Naive thymus-derived CD8-positive, alpha-beta T cell (primary cell): ENCODE measurements at regions of chr1 and their contacts with region 1.

Region 1: GRCh38 chr1:37479255-37480124 is 5.1 kb downstream of the ZC3H12A start:
- DNase-seq: peak; percentile 65 to 93 (median 74)
- ATAC-seq: peak; percentile 48 to 59
- H3K4me3 Mint-ChIP-seq: peak overlapping the region; percentile 84 to 99 (median 96)
- H3K27ac Mint-ChIP-seq: peak overlapping the region; percentile 96 to 99 (median 98)
- H3K4me1 Mint-ChIP-seq: peaks cover 35 to 57% (median 53%) of the 10 kb centered on the region in 4 donors
- H3K27me3 Mint-ChIP-seq: no peaks in the 10 kb centered on the region

Region 2: GRCh38 chr1:37449936-37450335 is 29.6 kb before region 1 on chr1:
- POLR2A ChIA-PET with region 1: interaction called, 26 read pairs
- DNase-seq: peak in 6 of 10 donors; percentile 8 to 46 (median 27)
- ATAC-seq: peak; percentile 57 to 88
- H3K4me3 Mint-ChIP-seq: peak overlapping the region; percentile 12 to 66 (median 35)
- H3K27ac Mint-ChIP-seq: peak overlapping the region in 7 of 10 donors; percentile 12 to 75 (median 53)
- H3K4me1 Mint-ChIP-seq: peaks cover 10 to 21% (median 20%) of the 10 kb centered on the region in 4 donors
- H3K27me3 Mint-ChIP-seq: peaks cover 0 to 12% (median 4%) of the 10 kb centered on the region in 5 donors

Region 3: DNA sequence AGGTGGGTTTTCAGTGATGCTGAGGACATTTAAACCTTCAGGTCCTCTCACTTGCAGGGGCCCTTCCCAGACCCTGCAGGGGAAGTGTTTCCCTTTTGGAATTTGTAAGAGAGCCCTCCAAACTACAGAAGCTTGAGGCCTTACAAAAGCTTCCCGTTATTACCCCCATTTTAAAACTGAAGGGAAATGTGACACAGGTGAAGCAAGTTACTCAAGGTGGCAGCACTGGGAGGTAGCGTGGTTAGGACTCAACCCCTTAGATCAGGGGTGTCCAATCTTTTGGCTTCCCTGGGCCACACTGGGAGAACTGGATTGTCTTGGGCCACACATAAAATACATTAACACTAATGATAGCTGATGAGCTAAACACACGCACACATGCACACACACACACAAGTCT is 21.0 kb before region 1 on chr1:
- POLR2A ChIA-PET with region 1: interaction called, 26 read pairs
- DNase-seq: peak in 1 of 10 donors; percentile 18
- ATAC-seq: peak; percentile 52 to 69
- H3K4me3 Mint-ChIP-seq: no peak overlapping the region
- H3K27ac Mint-ChIP-seq: peak overlapping the region in 5 of 10 donors; percentile 61 to 90 (median 83)
- H3K4me1 Mint-ChIP-seq: peaks cover 6 to 17% (median 8%) of the 10 kb centered on the region in 4 donors
- H3K27me3 Mint-ChIP-seq: no peaks in the 10 kb centered on the region

Region 4: GRCh38 chr1:37519613-37520012 is 40.1 kb after region 1 on chr1:
- POLR2A ChIA-PET with region 1: interaction called, 133 read pairs
- DNase-seq: peak in 7 of 10 donors; percentile 9 to 39 (median 34)
- ATAC-seq: peak; percentile 27 to 70
- H3K4me3 Mint-ChIP-seq: peak overlapping the region; percentile 85 to 99 (median 96)
- H3K27ac Mint-ChIP-seq: peak overlapping the region; percentile 85 to 97 (median 94)
- H3K4me1 Mint-ChIP-seq: peaks cover 25 to 42% (median 28%) of the 10 kb centered on the region in 4 donors
- H3K27me3 Mint-ChIP-seq: no peaks in the 10 kb centered on the region

Region 5: GRCh38 chr1:37612200-37612599 is 132.7 kb after region 1 on chr1:
- POLR2A ChIA-PET with region 1: no interaction called
- DNase-seq: no peak
- ATAC-seq: no peak
- H3K4me3 Mint-ChIP-seq: no peak overlapping the region
- H3K27ac Mint-ChIP-seq: peak overlapping the region in 2 of 10 donors; percentile 1 to 33
- H3K4me1 Mint-ChIP-seq: peaks cover 0 to 1% (median 0%) of the 10 kb centered on the region in 4 donors
- H3K27me3 Mint-ChIP-seq: peaks cover 15 to 41% (median 24%) of the 10 kb centered on the region in 5 donors